Cardiac septum (tissue), 1 donor: ENCODE measurements at regions of chr11 and their contacts with region 1.

Region 1: GRCh38 chr11:2186669-2187279 is 15.2 kb upstream of the TH start:
- DNase-seq: no peak

Region 2: GRCh38 chr11:2287091-2287490 is 100.3 kb after region 1 on chr11:
- intact Hi-C with region 1: no loop called
- DNase-seq: peak; percentile 29

Region 3: DNA sequence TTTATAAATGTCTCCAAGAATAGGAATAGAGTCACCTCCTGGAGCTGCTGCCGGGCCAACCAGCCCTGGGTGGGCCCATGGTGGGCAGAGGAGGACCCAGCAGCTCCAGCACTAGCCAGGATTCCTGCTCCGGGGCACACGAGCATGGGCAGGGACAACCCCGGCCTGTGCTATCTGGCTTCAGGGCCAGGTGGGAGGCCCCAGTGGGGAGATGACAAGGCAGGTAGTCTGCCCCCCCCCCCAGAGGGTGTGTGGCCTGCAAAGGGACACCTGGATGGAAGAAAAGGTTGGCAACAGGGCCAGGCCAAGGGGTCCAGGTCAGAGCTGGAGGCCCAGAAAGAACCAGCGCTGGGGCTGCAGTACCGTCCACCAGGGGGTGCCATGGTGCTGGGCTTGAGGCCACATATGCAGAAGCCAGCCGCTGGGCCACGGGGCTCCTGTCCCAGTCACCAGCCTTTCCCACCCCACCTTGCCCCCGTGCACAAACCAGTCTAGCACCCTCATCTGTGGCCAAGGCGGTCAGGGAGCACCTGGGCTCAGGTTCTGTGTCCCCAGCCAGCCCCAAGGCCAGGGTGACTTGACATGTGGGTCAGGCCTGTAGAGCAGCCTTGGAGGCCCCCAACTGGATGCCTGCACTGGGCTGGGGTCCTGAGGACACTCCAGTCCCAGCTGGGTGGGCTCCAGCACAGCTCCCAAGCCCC is 118.5 kb after region 1 on chr11:
- intact Hi-C with region 1: no loop called
- DNase-seq: peak; percentile 96

Region 4: GRCh38 chr11:2420502-2421225 is 233.9 kb after region 1 on chr11:
- intact Hi-C with region 1: loop called (anchors 2 kb)
- DNase-seq: peak; percentile 89